Common myeloid progenitor, CD34-positive (primary cell): ENCODE measurements at regions of chr20 and their contacts with region 1.

Region 1: GRCh38 chr20:57596998-57597939 is 23.0 kb downstream of the ZBP1 start:
- DNase-seq: peak; percentile 59 to 75 (median 74)
- H3K4me3 ChIP-seq: peak overlapping the region in 2 of 7 experiments; percentile 11 to 60
- H3K27ac ChIP-seq: no peak overlapping the region
- H3K4me1 ChIP-seq: peaks cover 0 to 4% (median 0%) of the 10 kb centered on the region in 4 experiments
- H3K27me3 ChIP-seq: peaks cover 0 to 8% (median 0%) of the 10 kb centered on the region in 5 experiments

Region 2: GRCh38 chr20:57498425-57499400 is 98.6 kb before region 1 on chr20:
- CTCF ChIA-PET with region 1: interaction called, 27 read pairs
- POLR2A ChIA-PET with region 1: no interaction called
- DNase-seq: peak; percentile 49 to 73 (median 64)
- H3K4me3 ChIP-seq: peak overlapping the region in 2 of 7 experiments; percentile 39 to 56
- H3K27ac ChIP-seq: no peak overlapping the region
- H3K4me1 ChIP-seq: peaks cover 11 to 23% (median 14%) of the 10 kb centered on the region in 4 experiments
- H3K27me3 ChIP-seq: peaks cover 9 to 28% (median 15%) of the 10 kb centered on the region in 5 experiments

Region 3: DNA sequence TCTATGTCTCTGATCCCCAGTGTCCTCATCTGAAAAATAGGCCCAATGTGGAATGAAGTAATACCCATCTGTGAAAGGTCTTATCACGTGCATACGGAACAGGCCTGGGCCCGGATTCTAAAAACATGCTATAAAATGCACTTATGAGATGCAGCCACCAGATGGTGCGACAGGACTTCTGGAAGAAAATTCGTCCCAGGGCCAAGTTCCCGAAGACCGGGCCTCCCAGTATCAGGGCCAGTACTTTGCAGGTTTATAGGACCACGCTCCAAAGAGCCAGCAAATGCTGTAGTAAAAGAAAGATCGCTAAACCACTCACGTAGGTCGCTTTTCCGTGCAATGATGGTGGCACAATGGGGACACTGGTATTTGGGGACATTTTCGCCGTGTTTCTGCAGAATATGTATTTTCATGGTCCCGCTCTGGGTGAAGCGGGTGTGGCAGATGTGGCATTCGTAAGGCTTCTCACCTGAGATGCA is 83.0 kb before region 1 on chr20:
- CTCF ChIA-PET with region 1: interaction called, 31 read pairs
- POLR2A ChIA-PET with region 1: no interaction called
- DNase-seq: peak; percentile 56 to 75 (median 68)
- H3K4me3 ChIP-seq: no peak overlapping the region
- H3K27ac ChIP-seq: no peak overlapping the region
- H3K4me1 ChIP-seq: no peaks in the 10 kb centered on the region
- H3K27me3 ChIP-seq: peaks cover 0 to 8% (median 0%) of the 10 kb centered on the region in 5 experiments

Region 4: DNA sequence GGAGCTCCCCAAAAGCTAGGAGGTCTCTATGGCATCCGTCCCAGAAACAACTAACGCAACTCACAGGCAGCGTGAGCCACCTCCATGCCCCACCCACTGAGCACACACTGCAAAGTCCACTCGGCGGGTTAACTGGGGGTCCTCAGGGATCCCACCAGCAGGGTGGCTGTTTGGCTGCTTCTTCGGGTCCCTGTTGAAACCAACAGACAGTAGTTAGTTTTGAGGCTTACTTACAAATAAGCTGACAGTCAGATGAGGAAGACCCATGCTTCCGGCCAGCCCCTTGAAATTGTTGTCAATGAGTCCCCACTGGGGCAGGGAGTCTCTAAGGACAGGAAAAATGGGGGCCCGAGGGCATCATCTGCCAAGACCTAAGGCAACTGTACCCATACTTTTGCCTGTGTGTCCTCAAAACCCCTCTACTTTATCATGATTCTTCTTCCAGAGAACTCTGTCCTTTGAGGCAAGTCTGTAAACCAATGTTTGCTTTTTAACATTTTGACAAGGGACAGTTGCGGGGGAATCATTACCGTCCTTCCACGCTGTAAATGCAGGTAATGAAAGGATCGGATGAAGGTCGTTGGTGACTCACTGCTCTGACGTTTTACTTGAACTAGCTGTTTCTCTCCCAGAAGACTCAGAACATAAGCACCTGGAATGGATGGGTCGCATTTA is 38.5 kb before region 1 on chr20:
- CTCF ChIA-PET with region 1: no interaction called
- POLR2A ChIA-PET with region 1: no interaction called
- DNase-seq: no peak
- H3K4me3 ChIP-seq: no peak overlapping the region
- H3K27ac ChIP-seq: no peak overlapping the region
- H3K4me1 ChIP-seq: no peaks in the 10 kb centered on the region
- H3K27me3 ChIP-seq: peaks cover 0 to 53% (median 12%) of the 10 kb centered on the region in 5 experiments

Region 5: DNA sequence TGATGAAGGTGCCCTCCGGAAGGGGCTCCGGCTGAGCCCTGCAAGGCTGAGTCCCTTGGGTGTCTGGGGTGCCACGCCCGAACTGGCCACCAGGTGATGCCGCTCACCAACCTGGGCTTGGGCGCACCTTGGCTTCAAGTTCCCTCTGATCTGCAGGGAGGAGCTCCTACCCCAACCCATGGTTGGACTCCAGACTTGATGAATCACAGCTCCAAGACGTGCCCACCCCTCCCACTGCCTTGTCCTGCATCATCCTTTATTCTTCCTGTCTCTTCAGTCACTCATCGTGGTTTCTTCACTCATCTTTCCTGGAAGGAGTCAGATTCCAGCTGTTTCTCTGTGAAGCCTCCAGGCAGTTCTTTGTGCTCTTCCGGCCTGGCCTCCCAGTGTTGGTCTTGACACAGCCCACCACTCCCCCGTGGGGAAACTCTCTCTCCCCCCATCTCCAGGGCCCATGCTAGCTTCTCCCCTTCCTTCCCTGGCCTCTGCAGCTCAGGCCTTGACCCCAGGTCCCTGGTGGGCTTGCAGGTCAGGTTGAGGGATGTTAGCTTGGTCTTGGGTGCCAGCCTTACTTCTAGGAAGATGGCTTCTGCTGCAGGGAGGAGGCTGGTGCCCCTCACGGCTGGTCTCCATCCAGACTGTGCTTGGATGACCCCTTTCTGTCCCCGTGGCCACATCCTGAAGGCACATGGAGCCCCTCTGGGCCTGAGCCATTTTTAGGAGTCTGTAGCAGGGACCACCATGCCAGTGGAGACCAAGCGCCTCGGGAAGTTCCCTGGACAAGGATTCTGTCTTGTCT is 25.5 kb after region 1 on chr20:
- CTCF ChIA-PET with region 1: interaction called, 14 read pairs
- POLR2A ChIA-PET with region 1: interaction called, 3 read pairs
- DNase-seq: peak; percentile 49 to 57 (median 55)
- H3K4me3 ChIP-seq: no peak overlapping the region
- H3K27ac ChIP-seq: no peak overlapping the region
- H3K4me1 ChIP-seq: peaks cover 11 to 57% (median 49%) of the 10 kb centered on the region in 4 experiments
- H3K27me3 ChIP-seq: no peaks in the 10 kb centered on the region

Region 6: DNA sequence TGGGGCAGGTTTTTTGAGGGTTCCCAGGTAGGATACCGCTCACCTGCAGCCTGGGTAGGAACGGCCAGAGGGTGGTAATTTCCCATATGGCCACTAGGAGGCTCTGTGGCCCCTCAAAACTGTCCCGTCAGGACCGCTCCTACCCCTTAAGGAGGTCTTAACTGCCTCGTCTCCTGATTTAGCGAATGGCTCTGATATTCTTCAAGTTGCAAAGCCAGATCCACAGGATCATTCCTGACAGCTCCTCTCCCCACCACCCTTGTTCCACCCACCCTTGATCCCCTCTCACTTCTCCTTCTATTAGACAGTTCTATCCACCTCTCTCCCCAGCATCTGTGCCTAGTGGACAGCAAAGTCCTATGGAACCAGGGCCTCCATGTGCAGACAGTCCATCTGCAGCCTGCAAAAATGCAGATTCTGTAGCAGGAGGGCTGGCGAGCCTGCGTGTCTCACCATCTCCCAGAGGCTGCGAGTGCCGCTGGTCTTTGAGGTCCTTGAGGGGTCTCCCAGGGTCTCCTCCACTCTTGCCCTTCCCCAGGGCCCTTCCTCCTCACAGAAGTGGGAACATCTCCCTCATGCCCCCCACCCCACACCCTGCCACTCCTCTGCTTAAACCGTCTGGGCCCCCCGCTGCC is 57.2 kb after region 1 on chr20:
- CTCF ChIA-PET with region 1: interaction called, 13 read pairs
- POLR2A ChIA-PET with region 1: no interaction called
- DNase-seq: peak; percentile 60 to 74 (median 69)
- H3K4me3 ChIP-seq: no peak overlapping the region
- H3K27ac ChIP-seq: no peak overlapping the region
- H3K4me1 ChIP-seq: no peaks in the 10 kb centered on the region
- H3K27me3 ChIP-seq: peaks cover 0 to 4% (median 0%) of the 10 kb centered on the region in 5 experiments

Region 7: GRCh38 chr20:58087193-58087858 is 490.1 kb after region 1 on chr20:
- CTCF ChIA-PET with region 1: interaction called, 24 read pairs
- POLR2A ChIA-PET with region 1: no interaction called
- DNase-seq: peak; percentile 24 to 52 (median 48)
- H3K4me3 ChIP-seq: no peak overlapping the region
- H3K27ac ChIP-seq: no peak overlapping the region
- H3K4me1 ChIP-seq: no peaks in the 10 kb centered on the region
- H3K27me3 ChIP-seq: peaks cover 0 to 4% (median 0%) of the 10 kb centered on the region in 5 experiments

Region 8: DNA sequence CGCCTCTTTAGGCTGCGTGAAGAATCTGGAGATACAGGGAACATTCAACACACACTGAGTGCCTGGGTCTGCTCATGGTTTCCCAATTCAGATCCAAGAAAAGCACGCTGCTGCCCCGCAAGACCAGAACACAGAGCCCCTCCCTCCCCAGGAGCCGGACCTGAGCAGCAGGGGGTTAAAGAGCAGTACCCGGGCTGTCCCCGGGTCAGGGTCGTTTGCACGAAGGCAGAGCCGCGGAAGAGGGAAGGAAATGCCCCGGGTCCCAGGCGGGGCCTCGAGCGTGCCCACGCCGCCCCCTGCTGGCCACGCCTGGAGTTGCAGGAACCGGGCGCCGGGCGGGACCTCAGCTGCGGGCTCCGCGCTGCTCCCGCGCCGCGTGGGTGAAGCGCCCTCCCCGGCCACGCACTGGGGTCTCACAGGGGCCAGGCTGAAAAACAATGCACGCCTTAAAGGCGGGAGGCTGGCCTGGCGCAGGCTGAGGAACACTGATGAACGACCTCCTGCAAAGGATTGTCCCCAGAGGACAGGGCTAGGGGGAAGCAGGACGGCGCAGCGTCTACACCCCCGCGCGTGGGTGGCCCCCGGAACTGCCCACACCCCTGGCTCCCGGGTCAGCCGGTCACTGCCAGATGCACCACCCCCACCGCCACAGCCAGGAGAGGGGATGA is 582.3 kb after region 1 on chr20:
- CTCF ChIA-PET with region 1: interaction called, 28 read pairs
- POLR2A ChIA-PET with region 1: no interaction called
- DNase-seq: peak; percentile 47 to 71 (median 68)
- H3K4me3 ChIP-seq: peak overlapping the region in 5 of 7 experiments; percentile 26 to 69 (median 44)
- H3K27ac ChIP-seq: no peak overlapping the region
- H3K4me1 ChIP-seq: peaks cover 1 to 14% (median 9%) of the 10 kb centered on the region in 4 experiments
- H3K27me3 ChIP-seq: peaks cover 0 to 17% (median 2%) of the 10 kb centered on the region in 5 experiments